ENCODE measurements at regions of chr3 and their contacts with region 1.

Region 1: GRCh38 chr3:11835028-11835639 is 11.6 kb downstream of the TAMM41 start:
- DNase-seq: no peak
- ATAC-seq: 0 out of 3 replicates have a peak, but pooled peaks have one; percentile 28
- H3K4me3 ChIP-seq: no peak overlapping the region
- H3K27ac ChIP-seq: no peak overlapping the region
- H3K4me1 ChIP-seq: no peaks in the 10 kb centered on the region
- H3K27me3 ChIP-seq: no peaks in the 10 kb centered on the region
- CTCF ChIP-seq: peak; percentile 13 to 45 (median 42); a peak in 5 of 6 replicates
- EP300 ChIP-seq: no peak
- POLR2A ChIP-seq: no peak
- RAD21 ChIP-seq: peak; percentile 42

Region 2: GRCh38 chr3:11846281-11847034 is 11.3 kb after region 1 on chr3 and contains the start of gene TAMM41:
- CTCF ChIA-PET with region 1: interaction called, 20 read pairs
- POLR2A ChIA-PET with region 1: no interaction called
- RAD21 ChIA-PET with region 1: no interaction called
- SMC1A ChIA-PET with region 1: interaction called, 4 read pairs
- in situ Hi-C with region 1: no loop called
- intact Hi-C with region 1: no loop called
- DNase-seq: peak; percentile 66
- ATAC-seq: peak; percentile 100
- H3K4me3 ChIP-seq: peak within 1 kb of the TSS; percentile 87
- H3K27ac ChIP-seq: peak within 1 kb of the TSS; percentile 85
- H3K4me1 ChIP-seq: no peaks in the 10 kb centered on the region
- H3K27me3 ChIP-seq: no peaks in the 10 kb centered on the region
- CTCF ChIP-seq: peak; percentile 86 to 98 (median 88); a peak in 5 of 6 replicates
- EP300 ChIP-seq: no peak
- POLR2A ChIP-seq: peak; percentile 100
- RAD21 ChIP-seq: peak; percentile 22; the same call in 1 of the 2 replicates
- polyA plus RNA-seq, gene TAMM41: 32.2 to 36.6 TPM

Measured in GM12878 (cell line).